BJ (cell line): ENCODE measurements at regions of chr15 and their contacts with region 1.

Region 1: DNA sequence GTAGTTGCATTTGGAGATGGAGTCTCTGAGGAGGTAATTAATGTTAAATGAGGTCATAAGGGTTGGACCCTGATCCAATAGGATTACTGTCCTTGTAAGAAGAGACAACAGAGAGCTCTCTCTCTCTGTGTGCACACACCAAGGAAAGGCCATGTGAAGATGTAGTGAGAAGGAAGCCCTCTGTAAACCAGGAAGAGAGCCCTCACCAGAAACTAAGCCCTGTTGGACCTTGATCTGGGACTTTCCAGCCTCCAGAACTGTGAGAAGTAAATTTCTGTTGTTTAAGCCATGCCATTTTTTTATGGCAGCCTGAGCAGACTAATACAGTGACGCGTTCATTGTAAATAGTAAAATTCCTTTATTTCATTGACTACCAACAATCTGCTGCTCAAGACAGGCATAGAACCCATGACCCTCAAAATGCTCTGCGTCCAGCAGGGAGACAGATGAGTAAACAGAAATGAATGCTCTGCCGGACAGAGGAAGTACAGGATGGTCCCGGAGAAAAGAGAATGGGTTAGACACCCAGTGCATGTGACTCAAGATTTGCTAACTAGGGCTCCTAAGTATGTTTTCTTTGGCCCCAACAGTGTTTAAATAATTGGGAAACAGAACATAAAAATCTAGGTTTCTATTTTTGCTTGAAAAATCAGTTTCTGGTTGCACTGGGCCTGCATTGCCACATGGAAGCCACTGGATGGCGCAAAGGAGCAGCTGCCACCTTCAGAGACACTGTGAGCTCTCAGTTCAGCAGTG is 37.9 kb upstream of the TNFAIP8L3 start:
- DNase-seq: peak; percentile 82
- H3K4me3 ChIP-seq: no peak overlapping the region
- H3K27me3 ChIP-seq: peaks cover 2% of the 10 kb centered on the region
- CTCF ChIP-seq: peak; percentile 99

Region 2: DNA sequence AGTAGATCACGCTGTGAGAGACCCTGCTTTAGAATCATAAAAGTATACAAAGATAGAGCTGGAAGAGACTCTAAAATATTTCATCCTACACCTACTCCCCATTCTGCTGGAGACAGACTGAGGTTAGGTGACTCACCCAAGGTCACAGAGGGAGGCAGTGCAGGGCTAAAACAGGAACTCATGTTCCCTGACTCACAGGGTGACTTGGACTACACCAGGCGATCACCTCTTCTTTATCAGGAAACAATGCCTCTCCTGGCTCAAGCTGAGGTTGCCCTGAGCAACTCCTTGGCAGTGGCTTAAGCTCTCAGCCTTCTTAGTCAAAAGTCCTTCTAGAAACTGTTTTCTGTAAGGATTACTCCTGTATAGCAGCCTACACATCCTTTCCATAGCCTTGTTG is 11.4 kb before region 1 on chr15:
- CTCF ChIA-PET with region 1: interaction called, 17 read pairs
- POLR2A ChIA-PET with region 1: no interaction called
- DNase-seq: peak; percentile 69
- H3K4me3 ChIP-seq: no peak overlapping the region
- H3K27me3 ChIP-seq: no peaks in the 10 kb centered on the region
- CTCF ChIP-seq: no peak

Region 3: GRCh38 chr15:51144021-51144532 is 11.5 kb after region 1 on chr15:
- CTCF ChIA-PET with region 1: interaction called, 12 read pairs
- POLR2A ChIA-PET with region 1: no interaction called
- DNase-seq: peak; percentile 10
- H3K4me3 ChIP-seq: no peak overlapping the region
- H3K27me3 ChIP-seq: no peaks in the 10 kb centered on the region; the same call in 1 of the 2 replicates
- CTCF ChIP-seq: no peak